ENCODE measurements at regions of chr2 and their contacts with region 1.

Region 1: GRCh38 chr2:23199115-23199918 is 185.7 kb upstream of the KLHL29 start:
- DNase-seq: peak; percentile 38
- ATAC-seq: peak; percentile 48; the same call in 1 of the 2 replicates
- H3K4me3 ChIP-seq: no peak overlapping the region
- H3K27ac ChIP-seq: no peak overlapping the region
- H3K4me1 ChIP-seq: no peaks in the 10 kb centered on the region
- H3K27me3 ChIP-seq: no peaks in the 10 kb centered on the region
- CTCF ChIP-seq: peak; percentile 61
- POLR2A ChIP-seq: no peak
- RAD21 ChIP-seq: peak; percentile 64

Region 2: DNA sequence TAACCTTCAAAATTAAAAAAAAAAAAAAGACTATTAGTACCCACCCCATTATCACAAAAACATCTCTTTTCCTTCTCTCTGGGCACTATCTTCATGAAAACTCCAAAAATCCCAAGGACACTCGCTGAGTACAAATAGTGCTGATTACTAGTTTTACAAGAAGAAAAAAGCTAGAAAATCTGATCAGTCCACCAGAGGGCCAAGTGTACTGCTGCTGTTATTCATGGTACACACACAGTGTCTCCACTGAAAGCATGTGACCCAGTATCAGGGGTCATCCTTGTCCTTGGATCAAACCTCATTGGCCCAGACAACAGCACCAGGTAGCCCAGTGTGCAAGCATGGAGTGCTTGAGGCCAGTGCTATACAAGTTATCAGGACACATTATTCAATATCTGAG is 197.1 kb before region 1 on chr2:
- CTCF ChIA-PET with region 1: no interaction called
- POLR2A ChIA-PET with region 1: no interaction called
- dilution Hi-C with region 1: no loop called
- in situ Hi-C with region 1: no loop called
- intact Hi-C with region 1: no loop called
- DNase-seq: no peak
- ATAC-seq: no peak
- H3K4me3 ChIP-seq: no peak overlapping the region
- H3K27ac ChIP-seq: no peak overlapping the region
- H3K4me1 ChIP-seq: no peaks in the 10 kb centered on the region
- H3K27me3 ChIP-seq: no peaks in the 10 kb centered on the region
- CTCF ChIP-seq: no peak
- POLR2A ChIP-seq: no peak
- RAD21 ChIP-seq: no peak

Region 3: DNA sequence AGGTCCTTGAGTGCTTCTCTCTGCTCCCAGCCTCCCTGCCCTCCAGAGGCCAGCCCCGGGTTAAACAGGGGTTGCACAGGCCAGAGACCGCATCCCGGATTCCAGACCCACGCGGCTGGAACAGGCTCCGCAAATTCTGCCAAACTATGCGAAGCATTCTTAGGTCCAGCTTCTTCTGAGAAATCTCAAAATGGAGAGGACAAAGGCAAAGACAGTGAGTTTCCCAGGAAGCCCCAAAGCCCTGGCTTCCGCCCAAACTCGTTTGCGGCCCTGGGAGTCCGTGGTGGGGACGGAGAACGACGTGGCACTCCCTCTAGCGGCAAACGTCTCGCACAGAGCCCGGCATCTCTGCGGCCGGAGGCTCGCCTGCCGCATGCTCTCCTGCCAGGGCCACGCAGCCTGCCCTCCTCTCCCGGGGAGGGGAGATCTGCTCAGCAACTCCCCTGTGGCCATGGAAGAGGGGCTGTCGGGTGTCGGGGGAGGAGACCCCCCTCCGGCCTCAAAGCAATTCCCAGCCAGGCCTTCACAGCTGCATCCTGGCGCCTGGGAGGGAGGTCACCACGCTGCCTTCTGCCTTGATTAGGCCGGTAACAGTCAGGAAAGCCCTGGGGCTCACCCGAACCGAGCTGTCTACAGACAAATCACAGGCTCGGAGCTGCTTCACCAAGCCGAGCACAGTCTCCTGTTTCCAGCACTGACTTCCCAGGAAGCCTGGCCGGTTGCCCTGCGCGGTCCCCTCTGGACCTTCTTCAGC is 152.2 kb after region 1 on chr2:
- CTCF ChIA-PET with region 1: no interaction called
- POLR2A ChIA-PET with region 1: no interaction called
- dilution Hi-C with region 1: no loop called
- in situ Hi-C with region 1: no loop called
- intact Hi-C with region 1: loop called (anchors 1 kb)
- DNase-seq: peak; percentile 66
- ATAC-seq: peak; percentile 99
- H3K4me3 ChIP-seq: no peak overlapping the region
- H3K27ac ChIP-seq: no peak overlapping the region
- H3K4me1 ChIP-seq: no peaks in the 10 kb centered on the region
- H3K27me3 ChIP-seq: peaks cover 18% of the 10 kb centered on the region
- CTCF ChIP-seq: peak; percentile 82
- POLR2A ChIP-seq: no peak
- RAD21 ChIP-seq: peak; percentile 80

Region 4: DNA sequence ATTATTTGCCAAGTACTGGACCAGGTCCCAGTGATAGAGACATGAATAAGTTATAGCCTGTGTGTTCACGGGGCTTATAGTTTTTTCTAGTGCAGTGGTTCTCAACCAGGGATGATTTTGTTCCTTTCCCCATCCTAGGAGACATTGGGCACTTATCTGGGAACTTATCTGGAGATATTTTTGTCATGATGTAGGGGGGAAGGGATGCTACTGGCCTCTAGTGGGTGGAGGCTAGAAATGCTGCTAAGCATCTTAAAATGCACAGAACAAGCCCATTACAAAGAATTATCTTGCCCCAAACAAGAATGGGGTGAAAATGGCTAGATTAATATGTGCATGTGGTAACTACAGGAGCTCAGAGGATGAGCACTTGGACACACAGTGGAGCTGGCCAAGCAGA is 260.9 kb after region 1 on chr2:
- CTCF ChIA-PET with region 1: interaction called, 3 read pairs
- POLR2A ChIA-PET with region 1: no interaction called
- dilution Hi-C with region 1: no loop called
- in situ Hi-C with region 1: loop called (anchors 10 kb)
- intact Hi-C with region 1: loop called (anchors 5 kb)
- DNase-seq: peak; percentile 47
- ATAC-seq: peak; percentile 63; the same call in 1 of the 2 replicates
- H3K4me3 ChIP-seq: no peak overlapping the region
- H3K27ac ChIP-seq: no peak overlapping the region
- H3K4me1 ChIP-seq: peaks cover 11% of the 10 kb centered on the region
- H3K27me3 ChIP-seq: no peaks in the 10 kb centered on the region
- CTCF ChIP-seq: peak; percentile 64
- POLR2A ChIP-seq: no peak
- RAD21 ChIP-seq: peak; percentile 75

Measured in IMR-90 (cell line).